ENCODE measurements at regions of chr4 and their contacts with region 1.

Region 1: DNA sequence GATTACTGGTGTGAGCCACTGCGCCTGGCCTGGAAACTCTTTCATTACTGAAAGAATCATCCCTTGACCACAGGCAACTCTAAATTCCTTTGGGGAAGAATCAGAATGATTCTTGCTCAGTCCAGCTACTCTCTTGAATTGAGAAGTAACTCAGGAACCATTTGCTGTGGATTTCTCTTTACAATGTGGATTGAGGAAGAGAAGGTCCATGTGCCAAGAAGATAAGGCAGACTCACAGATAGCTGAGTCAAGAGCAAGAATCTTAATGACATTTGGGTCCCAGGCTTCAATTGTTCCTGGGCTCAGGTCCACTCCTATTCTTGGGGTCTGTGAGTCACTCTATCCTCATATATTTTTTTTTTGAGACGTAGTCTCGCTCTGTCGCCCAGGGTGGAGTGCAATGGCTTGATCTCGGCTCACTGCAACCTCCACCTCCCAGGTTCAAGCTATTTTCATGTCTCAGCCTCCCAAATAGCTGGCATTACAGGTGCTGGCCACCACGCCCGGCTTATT is 6.2 kb upstream of the MGARP start:
- DNase-seq: no peak
- H3K4me3 Mint-ChIP-seq: no peak overlapping the region
- H3K27ac Mint-ChIP-seq: no peak overlapping the region
- H3K4me1 Mint-ChIP-seq: no peaks in the 10 kb centered on the region
- H3K27me3 Mint-ChIP-seq: no peaks in the 10 kb centered on the region
- CTCF ChIP-seq: no peak

Region 2: DNA sequence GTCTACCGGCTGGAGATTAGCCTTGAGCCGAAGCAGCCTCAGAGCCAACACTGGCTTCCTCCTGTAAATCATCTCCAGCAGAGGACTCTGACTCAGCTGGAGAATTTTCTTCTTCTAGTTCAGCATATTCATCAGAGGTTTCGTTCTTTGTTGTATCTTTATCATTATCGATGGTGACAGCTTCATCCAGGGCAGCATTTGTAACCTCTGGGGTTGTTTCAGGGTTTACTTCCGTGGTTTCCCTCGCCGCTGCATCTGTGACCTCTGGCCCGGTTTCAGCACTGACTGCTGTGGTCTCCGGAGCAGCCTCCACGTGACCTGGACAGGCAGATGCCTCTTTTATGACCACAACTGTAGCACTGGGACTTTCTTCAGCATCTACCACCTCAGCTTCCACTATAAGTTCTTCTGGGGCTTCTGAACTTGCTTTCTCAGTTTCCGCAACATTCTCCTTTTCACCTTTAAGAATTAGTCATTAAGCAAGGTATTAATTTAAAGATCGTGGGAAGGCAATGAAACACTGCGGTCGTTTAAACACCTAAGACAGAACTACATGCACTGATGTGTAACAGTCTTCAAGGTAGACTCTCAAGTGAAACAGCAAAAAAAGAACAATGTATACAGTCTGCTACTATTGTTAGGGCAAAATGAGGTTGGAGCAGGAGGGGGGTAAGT is 19.5 kb before region 1 on chr4:
- CTCF ChIA-PET with region 1: no interaction called
- POLR2A ChIA-PET with region 1: interaction called, 12 read pairs
- intact Hi-C with region 1: no loop called
- DNase-seq: peak; percentile 53
- H3K4me3 Mint-ChIP-seq: peak overlapping the region; percentile 71
- H3K27ac Mint-ChIP-seq: peak overlapping the region; percentile 61
- H3K4me1 Mint-ChIP-seq: peaks cover 14% of the 10 kb centered on the region
- H3K27me3 Mint-ChIP-seq: no peaks in the 10 kb centered on the region
- CTCF ChIP-seq: no peak

Measured in MCF 10A (cell line).